Activated CD4-positive, alpha-beta memory T cell treated with anti-CD3 and anti-CD28 coated beads, Interleukin-2, amount 10 ng/mL, durations not matched to agents 7 days and 5 days (primary cell): ENCODE measurements at regions of chr22 and their contacts with region 1.

Region 1: GRCh38 chr22:40487663-40488249 is 117.4 kb downstream of the SGSM3 start:
- DNase-seq: no peak
- H3K4me3 Mint-ChIP-seq: no peak overlapping the region
- H3K27ac Mint-ChIP-seq: no peak overlapping the region
- H3K4me1 Mint-ChIP-seq: peaks cover 21% of the 10 kb centered on the region
- H3K27me3 Mint-ChIP-seq: no peaks in the 10 kb centered on the region

Region 2: GRCh38 chr22:40443732-40444131 is 44.0 kb before region 1 on chr22:
- CTCF ChIA-PET with region 1: interaction called, 26 read pairs
- POLR2A ChIA-PET with region 1: no interaction called
- DNase-seq: no peak
- H3K4me3 Mint-ChIP-seq: no peak overlapping the region
- H3K27ac Mint-ChIP-seq: no peak overlapping the region
- H3K4me1 Mint-ChIP-seq: peaks cover 32% of the 10 kb centered on the region
- H3K27me3 Mint-ChIP-seq: no peaks in the 10 kb centered on the region

Region 3: DNA sequence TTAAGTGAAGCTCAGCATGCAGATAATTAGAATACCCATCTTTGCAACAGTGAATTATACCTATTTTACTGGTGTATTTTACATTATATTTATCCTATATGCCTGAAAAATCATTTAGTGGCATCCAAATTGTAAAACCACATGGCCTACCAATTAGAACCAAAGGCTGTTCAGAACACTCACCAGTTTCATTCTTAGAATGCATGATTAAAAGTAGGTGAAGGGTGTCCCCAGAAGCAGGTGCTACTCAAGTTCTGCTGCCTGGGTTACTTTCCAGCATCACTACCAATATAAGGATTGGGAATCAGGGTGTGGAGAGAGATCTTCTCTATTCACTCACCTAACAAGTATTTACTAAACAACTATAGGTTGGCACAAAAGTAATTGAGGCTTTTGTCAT is 14.1 kb before region 1 on chr22:
- CTCF ChIA-PET with region 1: interaction called, 11 read pairs
- POLR2A ChIA-PET with region 1: interaction called, 4 read pairs
- DNase-seq: no peak
- H3K4me3 Mint-ChIP-seq: no peak overlapping the region
- H3K27ac Mint-ChIP-seq: no peak overlapping the region
- H3K4me1 Mint-ChIP-seq: peaks cover 30% of the 10 kb centered on the region
- H3K27me3 Mint-ChIP-seq: no peaks in the 10 kb centered on the region

Region 4: GRCh38 chr22:40588726-40589125 is 101.0 kb after region 1 on chr22:
- CTCF ChIA-PET with region 1: no interaction called
- POLR2A ChIA-PET with region 1: no interaction called
- DNase-seq: no peak
- H3K4me3 Mint-ChIP-seq: no peak overlapping the region
- H3K27ac Mint-ChIP-seq: no peak overlapping the region
- H3K4me1 Mint-ChIP-seq: peaks cover 13% of the 10 kb centered on the region
- H3K27me3 Mint-ChIP-seq: no peaks in the 10 kb centered on the region